Activated CD4-positive, alpha-beta memory T cell treated with anti-CD3 and anti-CD28 coated beads for 36 hours (primary cell): ENCODE measurements at regions of chr3 and their contacts with region 1.

Region 1: DNA sequence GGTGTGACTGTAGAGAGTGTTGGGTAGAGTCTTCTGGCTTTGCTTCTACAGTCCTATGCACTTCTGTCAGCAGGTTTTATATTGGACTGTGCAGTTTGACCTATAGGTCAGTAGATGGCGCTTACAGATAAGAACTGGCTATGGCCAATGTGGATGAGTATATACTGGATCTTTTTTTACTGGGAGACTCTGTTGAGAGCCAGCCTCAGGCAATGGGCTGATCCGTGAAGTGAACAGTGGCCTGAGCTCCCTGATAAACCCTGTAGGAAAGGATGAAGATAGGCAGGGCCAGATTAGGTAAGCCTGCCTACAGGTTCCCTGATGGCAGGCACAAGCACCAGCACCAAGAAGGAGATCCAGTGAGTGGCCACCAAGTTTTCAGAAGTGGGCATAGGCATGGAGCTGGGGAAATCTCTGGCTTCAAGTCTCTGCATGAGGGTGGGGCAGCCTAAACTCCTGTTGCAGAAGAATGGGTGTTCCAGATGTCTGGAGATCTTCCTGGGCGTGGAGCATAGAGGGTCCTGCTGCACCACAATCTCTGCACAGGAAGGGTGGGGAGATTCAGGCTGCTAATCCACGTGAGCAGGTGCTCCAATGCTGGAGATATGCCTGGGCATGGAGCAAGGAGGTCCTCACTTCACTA is 326.0 kb upstream of the SGO1 start:
- DNase-seq: no peak
- H3K4me3 Mint-ChIP-seq: no peak overlapping the region
- H3K27ac Mint-ChIP-seq: no peak overlapping the region
- H3K4me1 Mint-ChIP-seq: no peaks in the 10 kb centered on the region
- H3K27me3 Mint-ChIP-seq: no peaks in the 10 kb centered on the region

Region 2: DNA sequence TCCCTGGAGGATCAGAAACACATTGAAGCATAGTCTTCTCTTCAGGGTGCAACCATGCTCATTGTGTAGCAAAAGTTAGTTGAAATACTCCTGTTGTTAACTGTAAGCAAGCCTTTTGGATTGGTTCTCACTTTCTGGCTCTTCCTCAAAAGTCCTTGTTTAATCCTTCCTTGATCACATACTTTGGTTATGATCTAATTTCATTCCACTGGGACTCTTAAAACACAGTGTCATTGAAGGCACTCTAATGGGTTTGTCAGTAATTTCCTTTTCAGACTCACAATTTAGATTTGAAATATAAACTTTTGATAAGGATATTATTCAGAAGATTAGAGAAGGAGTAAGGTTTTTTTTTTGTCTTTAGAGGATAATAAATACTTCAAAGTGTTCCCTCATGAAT is 125.7 kb after region 1 on chr3:
- CTCF ChIA-PET with region 1: no interaction called
- POLR2A ChIA-PET with region 1: no interaction called
- intact Hi-C with region 1: no loop called
- DNase-seq: no peak
- H3K4me3 Mint-ChIP-seq: no peak overlapping the region
- H3K27ac Mint-ChIP-seq: no peak overlapping the region
- H3K4me1 Mint-ChIP-seq: no peaks in the 10 kb centered on the region
- H3K27me3 Mint-ChIP-seq: no peaks in the 10 kb centered on the region

Region 3: DNA sequence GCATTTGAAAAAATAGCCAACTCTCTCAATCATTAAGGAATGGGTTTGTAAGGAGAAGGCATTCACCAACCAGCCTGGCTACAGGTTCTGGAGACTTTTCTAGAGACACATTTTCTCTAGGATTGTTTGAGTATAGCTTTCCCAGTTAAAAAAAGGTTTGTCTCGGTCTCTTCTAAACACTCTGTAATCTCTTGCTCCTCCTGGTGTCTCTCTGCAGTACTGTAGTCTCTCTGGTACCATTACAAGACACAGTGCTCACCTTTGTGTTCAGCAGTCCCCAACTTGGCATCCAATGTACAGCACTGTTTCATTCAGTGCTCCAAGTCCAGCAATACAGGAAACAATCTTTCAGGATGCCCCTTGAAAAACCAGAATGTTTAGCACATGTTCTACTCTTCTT is 704.6 kb after region 1 on chr3:
- CTCF ChIA-PET with region 1: no interaction called
- POLR2A ChIA-PET with region 1: no interaction called
- intact Hi-C with region 1: loop called (anchors 5 kb)
- DNase-seq: no peak
- H3K4me3 Mint-ChIP-seq: no peak overlapping the region
- H3K27ac Mint-ChIP-seq: no peak overlapping the region
- H3K4me1 Mint-ChIP-seq: no peaks in the 10 kb centered on the region
- H3K27me3 Mint-ChIP-seq: no peaks in the 10 kb centered on the region

Region 4: DNA sequence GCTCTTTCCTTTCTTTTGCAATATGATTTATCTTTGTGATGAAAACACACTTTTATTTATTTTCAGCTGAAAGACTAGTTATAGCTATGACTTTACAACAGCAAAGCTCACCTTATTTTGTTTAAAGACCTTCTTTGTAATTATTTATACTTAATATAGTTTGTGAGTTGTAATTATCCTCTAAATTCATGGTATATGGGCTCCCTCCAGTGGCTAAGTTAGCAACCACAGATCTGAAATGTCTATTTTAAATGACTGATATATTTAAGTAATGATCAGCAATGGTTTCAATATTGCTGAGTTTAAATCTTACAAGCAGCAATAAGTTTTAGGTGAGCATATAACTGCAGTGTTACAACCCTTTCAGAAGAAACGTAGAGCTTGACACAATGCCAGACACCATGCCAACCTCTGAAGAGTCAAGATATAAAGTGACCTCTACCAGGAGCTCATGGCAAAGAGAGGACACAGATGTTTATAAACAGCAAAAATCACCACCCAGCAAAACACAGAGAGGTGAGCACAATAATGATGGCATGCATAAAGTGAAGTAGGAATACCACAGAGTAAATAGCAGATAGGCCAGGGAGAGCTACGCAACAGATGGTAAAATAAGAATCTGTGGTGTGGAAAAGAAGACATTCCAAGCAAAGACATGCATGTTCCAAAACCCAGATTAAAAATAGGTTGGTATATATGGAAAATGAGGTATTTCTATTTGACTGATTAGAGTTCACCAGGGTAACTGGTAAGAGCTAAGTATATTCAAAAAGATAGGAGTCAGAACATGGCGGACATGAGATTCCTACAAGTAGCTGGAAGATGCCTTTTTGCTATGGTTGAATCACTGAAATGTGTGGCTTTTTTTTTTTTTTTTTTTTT is 1382.7 kb after region 1 on chr3:
- CTCF ChIA-PET with region 1: no interaction called
- POLR2A ChIA-PET with region 1: no interaction called
- intact Hi-C with region 1: loop called (anchors 5 kb)
- DNase-seq: no peak
- H3K4me3 Mint-ChIP-seq: no peak overlapping the region
- H3K27ac Mint-ChIP-seq: no peak overlapping the region
- H3K4me1 Mint-ChIP-seq: no peaks in the 10 kb centered on the region
- H3K27me3 Mint-ChIP-seq: no peaks in the 10 kb centered on the region